Right lobe of liver (tissue), 6 donors: ENCODE measurements at regions of chr2 and their contacts with region 1.

Region 1: GRCh38 chr2:30711646-30712085 is 95.6 kb downstream of the CAPN13 start:
- DNase-seq: peak; percentile 80 to 91 (median 82)
- ATAC-seq: peak; percentile 93 to 97 (median 96)
- H3K4me3 ChIP-seq: no peak overlapping the region
- H3K27ac ChIP-seq: no peak overlapping the region
- H3K4me1 ChIP-seq: no peaks in the 10 kb centered on the region
- H3K27me3 ChIP-seq: no peaks in the 10 kb centered on the region
- CTCF ChIP-seq: peak; percentile 100
- POLR2A ChIP-seq: no peak

Region 2: GRCh38 chr2:30208452-30208851 is 503.2 kb before region 1 on chr2:
- intact Hi-C with region 1: loop called (anchors 5 kb)
- DNase-seq: peak in 2 of 3 donors; percentile 48 to 64
- ATAC-seq: peak; percentile 95 to 99 (median 97)
- H3K4me3 ChIP-seq: no peak overlapping the region
- H3K27ac ChIP-seq: no peak overlapping the region
- H3K4me1 ChIP-seq: no peaks in the 10 kb centered on the region
- H3K27me3 ChIP-seq: no peaks in the 10 kb centered on the region
- CTCF ChIP-seq: peak; percentile 84 to 92 (median 89)
- POLR2A ChIP-seq: no peak

Region 3: GRCh38 chr2:30862054-30862651 is 150.5 kb after region 1 on chr2:
- intact Hi-C with region 1: loop called in 1 of 2 experiments (anchors 10 kb)
- DNase-seq: peak in 2 of 3 donors; percentile 65 to 74
- ATAC-seq: peak; percentile 68 to 92 (median 80)
- H3K4me3 ChIP-seq: no peak overlapping the region
- H3K27ac ChIP-seq: no peak overlapping the region
- H3K4me1 ChIP-seq: no peaks in the 10 kb centered on the region
- H3K27me3 ChIP-seq: no peaks in the 10 kb centered on the region
- CTCF ChIP-seq: peak; percentile 31 to 78 (median 74)
- POLR2A ChIP-seq: no peak

Region 4: DNA sequence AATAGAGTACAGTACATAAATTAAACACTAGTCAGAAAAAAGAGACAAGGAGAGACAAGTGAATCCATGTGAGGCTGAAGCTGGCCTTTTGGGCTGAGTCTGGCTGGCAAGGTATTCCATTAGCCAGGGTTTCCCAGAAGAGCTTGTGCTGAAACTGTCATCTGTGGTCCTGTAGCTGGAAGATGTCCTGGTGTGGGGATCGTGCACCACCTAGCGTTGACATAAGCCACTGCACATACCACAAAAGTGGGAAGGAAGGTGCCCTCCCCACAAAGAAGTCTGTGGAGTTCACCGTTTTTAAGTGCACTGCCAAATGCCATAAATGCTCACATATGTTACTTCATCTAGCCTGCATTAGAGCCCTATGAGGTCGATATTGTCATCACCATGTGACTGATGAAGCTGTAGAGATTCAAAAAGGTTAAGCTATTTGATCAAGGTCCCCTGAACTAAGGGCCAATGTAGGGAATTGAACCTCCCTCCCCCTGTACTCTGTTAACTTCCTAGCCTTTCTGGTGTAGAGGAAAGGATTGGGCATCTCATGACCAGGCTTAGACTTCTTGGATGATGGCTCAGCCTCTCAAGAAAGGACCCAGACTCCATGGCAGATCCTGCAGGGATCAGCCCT is 458.5 kb after region 1 on chr2:
- intact Hi-C with region 1: loop called (anchors 5 to 10 kb)
- DNase-seq: peak; percentile 52 to 67 (median 62)
- ATAC-seq: peak; percentile 95 to 100 (median 96)
- H3K4me3 ChIP-seq: no peak overlapping the region
- H3K27ac ChIP-seq: no peak overlapping the region
- H3K4me1 ChIP-seq: no peaks in the 10 kb centered on the region
- H3K27me3 ChIP-seq: no peaks in the 10 kb centered on the region
- CTCF ChIP-seq: peak; percentile 89 to 93 (median 90)
- POLR2A ChIP-seq: no peak